A673 (cell line): ENCODE measurements at regions of chr1 and their contacts with region 1.

Region 1: GRCh38 chr1:64823691-64824476 is 79.0 kb downstream of the RAVER2 start:
- DNase-seq: peak; percentile 94
- H3K4me3 ChIP-seq: no peak overlapping the region
- H3K27ac ChIP-seq: peak overlapping the region; percentile 50
- H3K4me1 ChIP-seq: peaks cover 42% of the 10 kb centered on the region
- H3K27me3 ChIP-seq: no peaks in the 10 kb centered on the region
- CTCF ChIP-seq: peak; percentile 93

Region 2: DNA sequence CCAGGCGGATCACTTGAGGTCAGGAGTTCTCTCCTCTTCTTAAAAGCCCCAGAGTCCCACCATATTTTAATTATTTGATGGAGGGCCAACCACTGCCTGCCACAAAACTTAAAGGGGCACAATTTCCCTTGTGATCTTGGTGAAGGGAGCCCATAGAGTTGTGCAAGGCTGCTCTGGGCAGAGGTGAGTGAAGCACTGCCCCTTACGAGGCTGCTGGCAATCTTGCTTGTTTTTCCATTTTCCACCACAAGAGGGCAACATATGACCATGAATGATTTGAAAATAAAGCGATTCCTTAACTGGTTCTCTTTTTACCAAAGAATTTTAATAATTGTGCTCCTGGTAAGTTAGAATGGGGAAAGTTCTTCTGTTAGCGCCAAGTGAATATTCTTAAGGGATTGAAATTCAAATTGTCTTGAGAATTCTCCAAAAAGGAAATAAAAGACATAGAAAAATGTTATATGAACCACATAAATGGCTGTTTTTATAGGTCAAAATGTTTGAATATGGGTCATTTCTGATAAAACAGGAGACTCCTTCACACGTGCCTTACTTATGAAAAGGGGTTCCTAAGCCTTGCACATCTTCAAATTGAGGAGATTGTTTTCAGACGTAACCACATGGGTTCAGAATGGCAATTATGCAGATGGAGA is 1208.0 kb before region 1 on chr1:
- CTCF ChIA-PET with region 1: no interaction called
- POLR2A ChIA-PET with region 1: no interaction called
- intact Hi-C with region 1: loop called (anchors 5 kb)
- DNase-seq: peak; percentile 81
- H3K4me3 ChIP-seq: no peak overlapping the region
- H3K27ac ChIP-seq: no peak overlapping the region
- H3K4me1 ChIP-seq: no peaks in the 10 kb centered on the region
- H3K27me3 ChIP-seq: no peaks in the 10 kb centered on the region
- CTCF ChIP-seq: peak; percentile 73

Region 3: GRCh38 chr1:64268653-64269557 is 555.0 kb before region 1 on chr1:
- CTCF ChIA-PET with region 1: no interaction called
- POLR2A ChIA-PET with region 1: no interaction called
- intact Hi-C with region 1: loop called (anchors 1 kb)
- DNase-seq: peak; percentile 95
- H3K4me3 ChIP-seq: no peak overlapping the region
- H3K27ac ChIP-seq: peak overlapping the region; percentile 82
- H3K4me1 ChIP-seq: peaks cover 34% of the 10 kb centered on the region
- H3K27me3 ChIP-seq: no peaks in the 10 kb centered on the region
- CTCF ChIP-seq: peak; percentile 76

Region 4: GRCh38 chr1:64553281-64553680 is 270.6 kb before region 1 on chr1:
- CTCF ChIA-PET with region 1: no interaction called
- POLR2A ChIA-PET with region 1: no interaction called
- intact Hi-C with region 1: loop called (anchors 5 kb)
- DNase-seq: no peak
- H3K4me3 ChIP-seq: no peak overlapping the region
- H3K27ac ChIP-seq: no peak overlapping the region
- H3K4me1 ChIP-seq: peaks cover 39% of the 10 kb centered on the region
- H3K27me3 ChIP-seq: no peaks in the 10 kb centered on the region
- CTCF ChIP-seq: peak; percentile 40; the same call in 1 of the 2 replicates

Region 5: DNA sequence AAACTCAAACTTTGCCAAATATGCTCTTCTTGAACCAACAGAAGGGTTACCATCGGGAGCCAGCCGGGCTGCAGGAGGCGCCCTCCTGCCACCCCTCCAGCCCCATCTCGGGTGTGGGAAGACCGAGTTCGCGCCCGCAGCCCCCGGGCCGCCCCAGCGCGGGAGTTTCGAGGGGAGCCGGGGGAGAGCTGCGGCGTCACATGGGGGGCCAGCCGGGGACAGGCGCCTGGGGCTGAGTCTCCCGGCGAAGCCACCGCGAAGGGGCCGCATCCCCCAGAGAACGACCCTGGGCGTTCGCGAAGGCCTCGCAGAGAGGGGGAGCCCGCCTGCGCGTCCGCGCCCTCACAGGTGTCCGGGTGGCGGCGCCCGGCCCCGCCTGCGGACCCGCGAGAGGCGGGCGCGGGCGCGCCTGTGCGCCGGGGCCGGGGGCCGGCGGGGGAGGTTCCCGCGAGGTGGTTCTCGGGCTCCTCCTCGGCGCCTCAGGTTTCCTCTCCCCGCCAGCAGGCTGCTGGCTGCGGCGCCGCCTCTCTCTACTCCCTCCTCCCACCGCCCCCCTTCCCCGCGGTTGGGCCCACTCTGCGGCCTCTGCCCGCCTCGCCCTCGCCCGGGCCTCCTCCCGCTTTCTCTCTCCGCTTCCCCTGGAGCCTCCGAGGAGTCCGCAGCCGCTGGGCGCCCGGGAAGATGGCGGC is 79.2 kb before region 1 on chr1 and contains the start of gene RAVER2:
- CTCF ChIA-PET with region 1: interaction called, 5 read pairs
- POLR2A ChIA-PET with region 1: interaction called, 4 read pairs
- intact Hi-C with region 1: loop called (anchors 1 kb)
- DNase-seq: peak; percentile 91
- H3K4me3 ChIP-seq: peak within 1 kb of the TSS; percentile 98
- H3K27ac ChIP-seq: peak within 1 kb of the TSS; percentile 93
- H3K4me1 ChIP-seq: peaks cover 28% of the 10 kb centered on the region
- H3K27me3 ChIP-seq: no peaks in the 10 kb centered on the region
- CTCF ChIP-seq: peak; percentile 72
- total RNA-seq, gene RAVER2: 34.1 and 36.5 TPM in 2 replicates

Region 6: DNA sequence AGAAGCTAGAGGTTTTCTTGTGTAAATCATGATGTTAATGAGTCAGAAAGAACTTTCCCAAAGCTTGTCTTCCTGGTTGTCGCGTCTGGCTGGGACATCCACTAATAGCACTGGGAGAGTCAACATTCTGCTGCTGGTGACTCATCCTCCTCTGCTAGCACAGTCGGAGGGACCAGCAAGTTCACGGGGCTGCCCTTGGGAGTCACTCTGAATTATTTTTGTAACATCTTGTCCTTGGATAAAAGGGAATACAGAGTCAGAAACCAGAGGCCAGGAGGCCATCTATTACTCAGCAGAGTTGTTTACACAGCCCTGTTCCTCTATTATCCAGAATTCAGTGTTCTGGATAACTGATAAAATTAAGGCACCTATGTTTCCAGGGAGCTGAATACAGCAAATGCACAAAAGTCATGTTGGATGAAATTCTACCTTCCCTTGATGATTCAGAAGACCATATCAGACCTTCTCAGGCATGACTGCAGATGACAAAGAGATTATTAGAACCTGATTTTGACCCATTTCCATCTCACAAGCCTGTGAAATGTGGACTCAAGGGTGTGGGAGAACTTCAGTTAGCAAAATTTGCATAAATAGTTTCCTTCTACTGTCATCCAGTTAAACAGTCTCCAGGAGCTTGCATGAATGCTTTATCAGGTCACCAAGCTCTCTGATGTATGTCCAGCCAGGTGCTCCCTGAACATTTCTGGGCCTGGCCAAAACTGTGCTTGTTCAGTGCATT is 74.4 kb after region 1 on chr1:
- CTCF ChIA-PET with region 1: no interaction called
- POLR2A ChIA-PET with region 1: no interaction called
- intact Hi-C with region 1: no loop called
- DNase-seq: peak; percentile 90
- H3K4me3 ChIP-seq: no peak overlapping the region
- H3K27ac ChIP-seq: peak overlapping the region; percentile 41
- H3K4me1 ChIP-seq: peaks cover 90% of the 10 kb centered on the region
- H3K27me3 ChIP-seq: no peaks in the 10 kb centered on the region
- CTCF ChIP-seq: no peak

Region 7: GRCh38 chr1:65209005-65209885 is 385.4 kb after region 1 on chr1:
- CTCF ChIA-PET with region 1: no interaction called
- POLR2A ChIA-PET with region 1: no interaction called
- intact Hi-C with region 1: loop called (anchors 10 kb)
- DNase-seq: peak; percentile 48
- H3K4me3 ChIP-seq: no peak overlapping the region
- H3K27ac ChIP-seq: no peak overlapping the region
- H3K4me1 ChIP-seq: no peaks in the 10 kb centered on the region
- H3K27me3 ChIP-seq: no peaks in the 10 kb centered on the region
- CTCF ChIP-seq: peak; percentile 73

Region 8: GRCh38 chr1:65449214-65449842 is 625.4 kb after region 1 on chr1:
- CTCF ChIA-PET with region 1: no interaction called
- POLR2A ChIA-PET with region 1: no interaction called
- intact Hi-C with region 1: no loop called
- DNase-seq: no peak
- H3K4me3 ChIP-seq: no peak overlapping the region
- H3K27ac ChIP-seq: no peak overlapping the region
- H3K4me1 ChIP-seq: no peaks in the 10 kb centered on the region
- H3K27me3 ChIP-seq: no peaks in the 10 kb centered on the region
- CTCF ChIP-seq: no peak